Heart right ventricle (tissue), 16 donors: ENCODE measurements at regions of chr1 and their contacts with region 1.

Region 1: DNA sequence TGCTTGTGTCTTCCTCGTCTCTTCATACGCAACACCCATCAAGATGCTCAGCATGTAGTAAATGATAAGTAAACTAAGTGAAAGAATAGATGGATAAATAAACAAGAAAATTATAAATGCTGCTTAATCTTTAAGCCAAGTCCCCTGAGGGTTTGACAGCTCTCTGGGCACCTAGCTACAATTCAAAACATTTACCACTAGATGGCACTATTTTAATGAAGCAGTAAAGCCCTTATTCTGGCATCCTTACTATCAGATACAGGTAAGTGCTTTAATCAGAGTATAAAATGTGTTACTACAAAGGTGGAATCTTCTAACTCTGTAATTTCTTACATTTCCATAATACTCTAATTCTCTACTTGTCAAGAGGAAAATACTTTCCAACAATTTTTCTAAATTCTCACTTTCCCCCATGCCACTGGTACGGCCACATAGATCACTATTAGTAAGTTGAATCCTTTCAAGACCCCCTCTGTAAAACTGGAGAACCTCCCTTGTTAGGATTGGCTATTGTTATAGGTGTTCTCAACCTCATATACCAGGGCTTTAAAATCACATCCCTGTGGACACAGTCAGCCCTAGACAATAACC is 137.8 kb downstream of the BARHL2 start:
- DNase-seq: no peak
- ATAC-seq: no peak
- H3K4me3 ChIP-seq: no peak overlapping the region
- H3K27ac ChIP-seq: no peak overlapping the region
- H3K4me1 ChIP-seq: no peaks in the 10 kb centered on the region
- H3K27me3 ChIP-seq: peaks cover 0 to 59% (median 12%) of the 10 kb centered on the region in 7 donors
- CTCF ChIP-seq: peak; percentile 26 to 75 (median 68)

Region 2: GRCh38 chr1:90114521-90115141 is 464.7 kb before region 1 on chr1:
- intact Hi-C with region 1: loop called in 1 of 10 experiments (anchors 10 kb)
- DNase-seq: no peak
- ATAC-seq: no peak
- H3K4me3 ChIP-seq: no peak overlapping the region
- H3K27ac ChIP-seq: no peak overlapping the region
- H3K4me1 ChIP-seq: no peaks in the 10 kb centered on the region
- H3K27me3 ChIP-seq: peaks cover 0 to 64% (median 31%) of the 10 kb centered on the region in 7 donors
- CTCF ChIP-seq: peak; percentile 19 to 77 (median 65)